ENCODE measurements at regions of chr13 and their contacts with region 1.

Region 1: DNA sequence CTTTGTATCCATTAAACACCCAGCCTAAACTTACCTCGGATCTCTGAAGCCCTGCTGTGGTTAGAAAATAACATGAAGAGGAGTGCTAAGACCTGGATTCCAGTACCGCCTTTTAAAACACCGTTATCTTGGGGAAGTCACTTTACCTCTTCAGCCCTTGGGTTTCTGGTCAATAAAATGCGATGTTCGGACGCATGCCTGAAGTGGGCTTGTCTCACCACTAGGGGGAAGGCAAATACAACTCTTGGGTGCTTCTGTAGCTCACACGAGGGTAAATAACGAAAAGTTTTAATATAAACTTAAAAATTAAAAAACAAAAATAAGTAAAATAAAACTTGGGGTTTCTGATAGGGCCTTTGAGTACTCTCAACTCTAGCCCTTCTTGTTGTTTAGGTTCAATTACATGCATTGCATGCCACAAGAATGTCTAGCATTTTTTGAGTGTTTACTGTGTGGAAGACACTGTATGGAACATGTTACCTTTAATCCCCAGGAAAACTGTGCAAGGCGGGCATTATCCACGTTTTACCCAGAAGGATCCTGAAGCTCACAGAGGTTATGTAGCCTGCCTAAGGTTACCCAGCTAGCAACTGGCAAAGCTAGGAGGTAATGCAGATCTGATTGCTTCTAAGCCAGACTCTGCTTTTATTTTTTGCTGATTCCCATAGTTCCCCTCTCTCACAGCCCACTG is 240.4 kb downstream of the LMO7 start:
- DNase-seq: peak; percentile 23
- ATAC-seq: peak; percentile 97
- H3K4me3 ChIP-seq: no peak overlapping the region
- H3K27ac ChIP-seq: no peak overlapping the region
- H3K4me1 ChIP-seq: no peaks in the 10 kb centered on the region
- H3K27me3 ChIP-seq: no peaks in the 10 kb centered on the region
- CTCF ChIP-seq: peak; percentile 94 to 95 (median 94)
- EP300 ChIP-seq: no peak
- POLR2A ChIP-seq: no peak
- RAD21 ChIP-seq: peak; percentile 99

Region 2: DNA sequence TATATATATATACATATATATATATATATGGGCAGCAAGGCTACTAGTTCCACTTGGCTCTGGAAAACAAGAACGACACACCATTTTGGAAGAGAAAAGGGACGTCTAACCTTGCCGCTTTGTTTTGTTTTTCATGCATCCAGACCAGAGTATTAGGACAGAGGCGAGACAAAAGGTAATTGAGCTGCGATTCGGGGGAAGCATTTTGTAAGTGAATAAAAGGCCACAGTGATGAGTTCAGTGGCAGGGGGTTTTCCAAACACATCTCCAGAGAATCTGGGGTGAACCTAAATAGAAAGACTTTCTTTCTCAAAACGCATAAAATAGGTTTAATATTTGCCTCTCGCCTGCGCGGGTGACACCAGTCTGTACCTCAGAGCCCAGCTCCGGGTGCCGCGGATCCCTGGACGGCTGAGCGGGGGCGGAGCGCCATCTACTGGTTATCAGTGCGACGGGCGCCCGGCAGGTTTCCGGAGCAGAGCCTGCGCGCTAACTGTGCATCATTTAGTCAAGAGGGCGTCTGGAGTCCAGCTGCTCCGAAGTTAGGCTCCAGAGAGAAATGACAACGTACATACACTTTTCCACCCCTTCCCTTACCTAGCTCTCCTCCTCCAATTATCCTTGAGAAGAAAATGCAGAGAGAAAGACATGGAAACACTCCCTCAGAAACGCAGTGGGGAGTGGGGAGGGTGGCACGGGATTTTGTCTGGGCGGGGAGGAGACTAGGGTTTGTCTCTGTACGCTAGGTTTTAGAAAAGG is 656.8 kb before region 1 on chr13:
- CTCF ChIA-PET with region 1: no interaction called
- POLR2A ChIA-PET with region 1: no interaction called
- RAD21 ChIA-PET with region 1: no interaction called
- SMC1A ChIA-PET with region 1: no interaction called
- in situ Hi-C with region 1: no loop called
- intact Hi-C with region 1: no loop called
- DNase-seq: peak; percentile 7
- ATAC-seq: peak; percentile 99
- H3K4me3 ChIP-seq: no peak overlapping the region
- H3K27ac ChIP-seq: no peak overlapping the region
- H3K4me1 ChIP-seq: no peaks in the 10 kb centered on the region
- H3K27me3 ChIP-seq: no peaks in the 10 kb centered on the region; a peak in 1 of 4 replicates
- CTCF ChIP-seq: peak; percentile 93 to 98 (median 96); a peak in 5 of 6 replicates
- EP300 ChIP-seq: no peak
- POLR2A ChIP-seq: no peak
- RAD21 ChIP-seq: peak; percentile 99

Region 3: GRCh38 chr13:75687150-75687763 is 189.2 kb before region 1 on chr13:
- CTCF ChIA-PET with region 1: interaction called, 54 read pairs
- POLR2A ChIA-PET with region 1: no interaction called
- RAD21 ChIA-PET with region 1: interaction called, 4 read pairs
- SMC1A ChIA-PET with region 1: interaction called, 228 read pairs
- in situ Hi-C with region 1: no loop called
- intact Hi-C with region 1: no loop called
- DNase-seq: no peak
- ATAC-seq: peak; percentile 60
- H3K4me3 ChIP-seq: no peak overlapping the region
- H3K27ac ChIP-seq: no peak overlapping the region
- H3K4me1 ChIP-seq: no peaks in the 10 kb centered on the region
- H3K27me3 ChIP-seq: no peaks in the 10 kb centered on the region
- CTCF ChIP-seq: peak; percentile 23 to 39 (median 38); a peak in 5 of 6 replicates
- EP300 ChIP-seq: no peak
- POLR2A ChIP-seq: no peak
- RAD21 ChIP-seq: peak; percentile 47

Region 4: DNA sequence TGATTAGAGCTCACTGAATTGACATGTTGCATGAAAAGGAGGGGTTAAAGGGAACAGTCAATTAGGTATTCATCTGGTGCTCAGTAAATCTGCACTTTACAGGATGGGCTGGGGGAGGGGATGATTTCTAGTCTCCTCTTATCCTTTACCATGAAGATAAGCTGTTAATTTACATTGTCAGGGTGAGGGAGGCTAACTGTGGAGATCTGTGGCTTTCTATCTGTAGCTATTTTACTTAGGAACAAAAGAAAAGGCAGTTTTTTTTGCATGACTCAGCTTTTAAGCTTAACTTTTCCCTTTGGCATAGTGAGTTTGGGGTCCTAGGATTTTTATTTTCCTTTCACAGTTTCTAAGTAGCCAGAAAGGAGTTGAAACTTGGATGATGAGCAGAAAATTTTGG is 12.9 kb after region 1 on chr13:
- CTCF ChIA-PET with region 1: interaction called, 16 read pairs
- POLR2A ChIA-PET with region 1: no interaction called
- RAD21 ChIA-PET with region 1: no interaction called
- SMC1A ChIA-PET with region 1: interaction called, 8 read pairs
- in situ Hi-C with region 1: no loop called
- intact Hi-C with region 1: no loop called
- DNase-seq: no peak
- ATAC-seq: no peak
- H3K4me3 ChIP-seq: no peak overlapping the region
- H3K27ac ChIP-seq: no peak overlapping the region
- H3K4me1 ChIP-seq: no peaks in the 10 kb centered on the region
- H3K27me3 ChIP-seq: no peaks in the 10 kb centered on the region; a peak in 1 of 4 replicates
- CTCF ChIP-seq: no peak
- EP300 ChIP-seq: no peak
- POLR2A ChIP-seq: no peak
- RAD21 ChIP-seq: no peak

Region 5: DNA sequence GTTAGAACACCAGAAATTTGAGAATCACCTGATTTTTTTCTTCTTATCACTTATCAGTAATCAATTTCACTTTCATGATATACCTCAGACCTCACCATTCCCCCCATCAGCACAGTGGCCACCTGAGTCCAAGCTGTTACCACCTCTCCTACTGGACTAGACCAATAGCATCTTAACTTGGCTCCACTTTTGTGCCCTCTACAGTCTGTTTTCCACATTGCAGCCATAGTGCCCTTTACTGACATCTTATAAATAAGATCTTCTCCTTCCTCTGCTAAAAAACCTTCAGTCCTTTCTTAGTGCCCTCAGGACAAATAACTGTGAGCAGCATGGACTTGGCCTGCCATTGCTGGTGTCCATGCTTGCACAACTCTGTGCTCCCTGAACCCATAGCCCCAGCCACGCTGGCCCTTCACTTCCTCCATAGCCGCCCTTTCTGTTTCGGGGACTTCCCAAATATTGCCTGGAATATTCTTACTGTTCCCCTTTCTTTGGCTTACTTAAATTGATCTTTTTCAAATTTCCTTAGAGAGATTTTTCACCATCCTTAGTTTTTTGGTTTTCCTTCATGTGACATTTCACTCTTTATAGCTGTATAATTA is 140.4 kb after region 1 on chr13:
- CTCF ChIA-PET with region 1: interaction called, 83 read pairs
- POLR2A ChIA-PET with region 1: no interaction called
- RAD21 ChIA-PET with region 1: interaction called, 35 read pairs
- SMC1A ChIA-PET with region 1: interaction called, 42 read pairs
- in situ Hi-C with region 1: loop called (anchors 5 kb)
- intact Hi-C with region 1: loop called (anchors 1 kb)
- DNase-seq: no peak
- ATAC-seq: peak; percentile 90
- H3K4me3 ChIP-seq: no peak overlapping the region
- H3K27ac ChIP-seq: no peak overlapping the region
- H3K4me1 ChIP-seq: no peaks in the 10 kb centered on the region
- H3K27me3 ChIP-seq: no peaks in the 10 kb centered on the region
- CTCF ChIP-seq: peak; percentile 57 to 72 (median 60); a peak in 5 of 6 replicates
- EP300 ChIP-seq: no peak
- POLR2A ChIP-seq: no peak
- RAD21 ChIP-seq: peak; percentile 69

Region 6: DNA sequence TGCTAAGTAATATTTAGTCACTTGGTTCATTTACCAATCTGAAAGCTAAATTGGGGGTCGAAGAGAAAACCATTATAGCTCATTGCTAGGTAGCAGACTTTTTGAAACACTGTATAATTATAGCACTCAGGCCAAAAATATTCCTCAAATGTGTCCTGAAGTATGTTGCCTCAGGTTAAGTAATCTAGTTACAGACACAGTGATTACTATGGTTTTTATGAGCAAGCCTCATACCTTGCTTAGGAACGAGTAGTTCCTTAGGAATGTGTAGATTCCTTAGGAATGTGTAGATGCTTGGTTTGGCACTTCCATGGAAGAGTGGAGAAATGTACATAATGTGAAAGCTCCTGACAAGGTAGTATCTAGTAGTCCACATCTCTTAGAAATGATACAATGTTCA is 147.1 kb after region 1 on chr13:
- CTCF ChIA-PET with region 1: interaction called, 83 read pairs
- POLR2A ChIA-PET with region 1: no interaction called
- RAD21 ChIA-PET with region 1: interaction called, 35 read pairs
- SMC1A ChIA-PET with region 1: interaction called, 42 read pairs
- in situ Hi-C with region 1: loop called (anchors 5 kb)
- intact Hi-C with region 1: no loop called
- DNase-seq: no peak
- ATAC-seq: no peak
- H3K4me3 ChIP-seq: no peak overlapping the region
- H3K27ac ChIP-seq: no peak overlapping the region
- H3K4me1 ChIP-seq: no peaks in the 10 kb centered on the region
- H3K27me3 ChIP-seq: no peaks in the 10 kb centered on the region
- CTCF ChIP-seq: no peak
- EP300 ChIP-seq: no peak
- POLR2A ChIP-seq: no peak
- RAD21 ChIP-seq: no peak

Region 7: GRCh38 chr13:76473552-76474134 is 597.1 kb after region 1 on chr13:
- CTCF ChIA-PET with region 1: interaction called, 89 read pairs
- POLR2A ChIA-PET with region 1: no interaction called
- RAD21 ChIA-PET with region 1: interaction called, 12 read pairs
- SMC1A ChIA-PET with region 1: interaction called, 48 read pairs
- in situ Hi-C with region 1: loop called (anchors 5 kb)
- intact Hi-C with region 1: loop called (anchors 1 kb)
- DNase-seq: peak; percentile 25
- ATAC-seq: peak; percentile 100
- H3K4me3 ChIP-seq: no peak overlapping the region
- H3K27ac ChIP-seq: no peak overlapping the region
- H3K4me1 ChIP-seq: no peaks in the 10 kb centered on the region
- H3K27me3 ChIP-seq: no peaks in the 10 kb centered on the region
- CTCF ChIP-seq: peak; percentile 68 to 85 (median 84)
- EP300 ChIP-seq: no peak
- POLR2A ChIP-seq: no peak
- RAD21 ChIP-seq: peak; percentile 96

Region 8: GRCh38 chr13:76980075-76980718 is 1103.7 kb after region 1 on chr13:
- CTCF ChIA-PET with region 1: interaction called, 5 read pairs
- POLR2A ChIA-PET with region 1: no interaction called
- RAD21 ChIA-PET with region 1: no interaction called
- SMC1A ChIA-PET with region 1: interaction called, 3 read pairs
- in situ Hi-C with region 1: loop called (anchors 10 kb)
- intact Hi-C with region 1: no loop called
- DNase-seq: no peak
- ATAC-seq: peak; percentile 100
- H3K4me3 ChIP-seq: no peak overlapping the region
- H3K27ac ChIP-seq: no peak overlapping the region
- H3K4me1 ChIP-seq: no peaks in the 10 kb centered on the region
- H3K27me3 ChIP-seq: peaks cover 0 to 2% of the 10 kb centered on the region in 2 experiments; a peak in 2 of 4 replicates
- CTCF ChIP-seq: peak; percentile 89 to 99 (median 94)
- EP300 ChIP-seq: no peak
- POLR2A ChIP-seq: no peak
- RAD21 ChIP-seq: peak; percentile 78